A673 (cell line): ENCODE measurements at regions of chr4 and their contacts with region 1.

Region 1: GRCh38 chr4:168480931-168481611 is 779 bp upstream of the DDX60L start:
- DNase-seq: peak; percentile 88
- H3K4me3 ChIP-seq: peak overlapping the region; percentile 63
- H3K27ac ChIP-seq: peak overlapping the region; percentile 73
- H3K4me1 ChIP-seq: no peaks in the 10 kb centered on the region
- H3K27me3 ChIP-seq: no peaks in the 10 kb centered on the region
- CTCF ChIP-seq: no peak

Region 2: DNA sequence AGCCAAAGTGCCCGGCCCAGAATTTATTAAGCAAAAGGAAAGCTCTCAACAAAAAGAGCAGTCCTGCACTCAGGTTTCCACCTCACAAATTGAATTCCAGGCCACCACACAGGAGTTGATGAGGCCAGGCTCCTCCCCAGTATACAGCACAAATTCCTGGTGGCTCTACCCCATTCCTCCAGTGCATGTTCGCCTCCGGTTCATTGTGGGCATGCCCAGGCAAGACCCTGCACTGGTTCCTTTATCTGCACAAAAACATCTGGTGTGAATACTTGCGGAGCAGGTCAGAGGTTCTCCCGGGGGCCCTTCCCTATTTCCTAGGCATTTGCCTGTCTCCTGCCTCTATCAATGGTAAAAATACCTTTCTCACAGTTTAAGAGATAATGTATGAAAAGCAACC is 584.0 kb before region 1 on chr4:
- CTCF ChIA-PET with region 1: no interaction called
- POLR2A ChIA-PET with region 1: no interaction called
- intact Hi-C with region 1: no loop called
- DNase-seq: peak; percentile 3
- H3K4me3 ChIP-seq: no peak overlapping the region
- H3K27ac ChIP-seq: no peak overlapping the region
- H3K4me1 ChIP-seq: no peaks in the 10 kb centered on the region
- H3K27me3 ChIP-seq: peaks cover 7% of the 10 kb centered on the region
- CTCF ChIP-seq: no peak

Region 3: DNA sequence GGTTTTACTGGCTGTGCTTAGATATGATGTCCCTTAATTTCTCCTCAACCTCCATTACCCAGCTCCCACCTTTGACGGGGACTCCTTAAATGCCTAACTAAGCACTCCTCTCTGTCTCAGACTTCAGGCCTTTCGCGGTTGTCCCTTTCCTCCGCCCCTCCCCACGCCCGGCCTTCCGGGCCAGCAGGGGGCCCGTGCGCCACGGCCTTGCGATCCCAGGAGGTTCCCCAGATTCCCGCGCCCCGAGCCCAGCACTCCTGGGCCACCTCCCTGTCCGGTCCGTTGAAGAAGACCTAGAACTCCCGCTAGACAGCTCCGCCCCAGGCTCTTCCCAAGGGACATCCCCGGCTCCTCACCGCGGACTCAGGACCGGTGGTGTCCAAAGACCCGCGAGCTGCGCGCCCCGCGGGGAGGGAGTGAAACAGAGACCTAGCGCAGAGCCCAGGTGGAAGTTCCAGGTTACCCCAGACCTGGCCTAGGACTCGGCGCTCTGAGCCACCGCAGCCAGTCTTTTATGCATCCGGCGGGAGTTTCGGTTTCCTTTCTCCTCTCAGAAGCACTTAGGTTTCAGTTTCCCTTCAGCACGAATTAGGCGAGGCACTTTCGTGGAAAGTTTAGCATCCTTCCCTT is 162.7 kb before region 1 on chr4 and contains the start of gene DDX60:
- CTCF ChIA-PET with region 1: no interaction called
- POLR2A ChIA-PET with region 1: no interaction called
- intact Hi-C with region 1: loop called (anchors 5 kb)
- DNase-seq: peak; percentile 75
- H3K4me3 ChIP-seq: peak within 1 kb of the TSS; percentile 81
- H3K27ac ChIP-seq: peak within 1 kb of the TSS; percentile 81
- H3K4me1 ChIP-seq: no peaks in the 10 kb centered on the region
- H3K27me3 ChIP-seq: no peaks in the 10 kb centered on the region
- CTCF ChIP-seq: no peak
- total RNA-seq, gene DDX60: 3.3 and 4.0 TPM in 2 replicates